AG04450 (cell line): ENCODE measurements at regions of chr17 and their contacts with region 1.

Region 1: DNA sequence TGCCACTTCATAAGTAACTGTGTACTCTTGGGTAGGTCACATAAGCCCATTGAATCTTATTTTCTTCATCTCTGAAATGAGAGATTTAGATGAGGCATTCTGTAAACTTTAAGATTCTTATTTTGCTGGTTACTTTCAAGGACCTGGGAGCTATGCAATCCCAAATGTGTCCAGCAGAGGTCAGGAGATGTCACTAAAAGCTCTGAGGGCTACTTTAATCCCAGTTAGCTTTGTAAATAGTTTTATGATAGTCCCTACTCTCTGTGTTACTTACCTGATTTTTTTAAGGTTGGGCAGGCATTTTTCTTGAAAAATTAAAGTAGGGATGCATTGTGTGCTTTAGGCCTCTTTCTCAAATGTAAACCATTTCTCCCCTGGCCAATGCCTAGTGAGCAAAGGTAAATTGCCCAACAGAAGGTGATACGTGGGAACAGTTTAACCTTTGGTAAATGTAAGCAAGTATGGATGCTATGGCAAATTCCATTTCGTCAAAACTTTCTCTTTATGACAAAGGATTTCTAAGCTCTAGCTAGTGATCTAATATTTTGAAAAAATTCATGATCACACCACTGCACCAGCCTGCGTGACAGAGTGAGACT is 57.1 kb upstream of the WSB1 start:
- DNase-seq: peak; percentile 59
- H3K4me3 ChIP-seq: no peak overlapping the region
- H3K27ac ChIP-seq: no peak overlapping the region
- H3K27me3 ChIP-seq: no peaks in the 10 kb centered on the region
- CTCF ChIP-seq: peak; percentile 95

Region 2: GRCh38 chr17:27199948-27200347 is 36.9 kb before region 1 on chr17:
- CTCF ChIA-PET with region 1: interaction called, 20 read pairs
- POLR2A ChIA-PET with region 1: no interaction called
- DNase-seq: no peak
- H3K4me3 ChIP-seq: no peak overlapping the region
- H3K27ac ChIP-seq: no peak overlapping the region
- H3K27me3 ChIP-seq: peaks cover 5% of the 10 kb centered on the region
- CTCF ChIP-seq: no peak

Region 3: GRCh38 chr17:27226615-27227230 is 10.1 kb before region 1 on chr17:
- CTCF ChIA-PET with region 1: interaction called, 46 read pairs
- POLR2A ChIA-PET with region 1: no interaction called
- DNase-seq: peak; percentile 37
- H3K4me3 ChIP-seq: no peak overlapping the region
- H3K27ac ChIP-seq: no peak overlapping the region
- H3K27me3 ChIP-seq: peaks cover 4% of the 10 kb centered on the region
- CTCF ChIP-seq: no peak

Region 4: DNA sequence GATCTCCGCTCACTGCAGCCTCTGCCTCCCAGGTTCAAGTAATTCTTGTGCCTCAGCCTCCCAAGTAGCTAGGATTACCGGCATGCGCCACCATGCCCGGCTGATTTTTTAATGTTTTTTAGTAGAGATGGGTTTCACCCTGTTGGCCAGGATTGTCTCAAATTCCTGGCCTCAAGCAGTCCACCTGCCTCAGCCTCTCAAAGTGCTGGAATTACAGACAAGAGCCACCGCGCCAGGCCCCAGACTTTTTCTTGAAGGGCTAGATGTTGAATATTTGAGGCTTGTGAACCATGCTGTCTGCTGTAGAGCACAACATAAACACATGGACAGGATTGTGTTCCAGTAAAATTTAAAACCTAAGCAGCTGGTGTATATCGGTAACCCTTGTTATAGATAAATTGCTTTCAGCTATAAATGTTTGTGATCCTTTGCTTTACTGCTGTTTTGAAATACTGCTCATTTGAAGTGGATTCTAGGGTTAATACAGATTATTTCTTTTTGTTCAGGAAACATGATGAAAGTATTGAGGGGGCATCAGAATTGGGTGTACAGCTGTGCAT is 69.5 kb after region 1 on chr17:
- CTCF ChIA-PET with region 1: interaction called, 24 read pairs
- POLR2A ChIA-PET with region 1: no interaction called
- DNase-seq: no peak
- H3K4me3 ChIP-seq: no peak overlapping the region
- H3K27ac ChIP-seq: no peak overlapping the region
- H3K27me3 ChIP-seq: no peaks in the 10 kb centered on the region
- CTCF ChIP-seq: no peak

Region 5: DNA sequence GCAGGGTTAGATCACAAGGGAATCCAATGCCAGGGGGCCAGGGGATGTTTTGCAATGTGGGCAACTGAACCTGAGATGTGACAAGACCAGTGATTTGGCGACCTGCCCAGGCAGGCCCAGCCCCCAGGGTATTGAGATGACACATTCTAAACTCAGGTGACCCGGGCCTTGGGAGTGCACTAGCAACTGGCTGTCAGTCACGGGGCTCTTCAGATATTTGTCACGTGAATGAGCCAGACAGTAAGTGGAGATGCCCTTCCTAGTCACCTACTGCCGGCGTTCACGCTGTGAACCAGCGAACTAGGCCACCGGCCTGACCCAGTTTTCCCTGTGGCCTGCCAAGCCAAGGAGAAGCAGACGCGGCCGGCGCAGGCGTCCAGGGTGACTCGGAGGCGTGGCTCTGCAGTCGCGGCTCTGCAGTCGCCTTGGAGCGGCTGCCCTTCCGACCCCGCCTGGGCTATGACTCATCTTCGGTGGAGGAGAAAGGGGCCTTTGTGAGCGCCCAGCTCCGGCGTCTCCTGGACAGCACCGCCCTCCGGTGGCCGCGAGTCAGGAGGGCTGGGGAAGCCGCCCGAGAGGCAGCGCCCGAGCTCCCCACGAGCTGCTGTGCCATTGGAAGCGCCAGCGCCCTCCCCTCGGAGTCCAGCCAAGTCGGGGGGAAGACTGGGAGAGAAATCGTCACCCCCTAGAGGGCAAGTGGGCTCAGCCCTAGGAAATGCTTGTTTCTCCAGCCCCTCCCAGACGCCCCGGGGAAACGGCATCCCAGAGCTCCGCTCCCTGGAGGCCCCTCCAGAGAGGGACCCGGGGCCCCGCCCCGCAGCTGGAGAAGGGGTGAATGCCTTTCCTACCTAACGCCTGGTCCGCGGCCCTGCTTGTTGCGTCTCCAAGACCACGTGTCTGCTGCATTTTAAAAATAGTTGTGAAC is 95.9 kb after region 1 on chr17:
- CTCF ChIA-PET with region 1: interaction called, 111 read pairs
- POLR2A ChIA-PET with region 1: interaction called, 6 read pairs
- DNase-seq: peak; percentile 89
- H3K4me3 ChIP-seq: peak overlapping the region; percentile 61
- H3K27ac ChIP-seq: peak overlapping the region; percentile 86
- H3K27me3 ChIP-seq: no peaks in the 10 kb centered on the region
- CTCF ChIP-seq: peak; percentile 78

Region 6: DNA sequence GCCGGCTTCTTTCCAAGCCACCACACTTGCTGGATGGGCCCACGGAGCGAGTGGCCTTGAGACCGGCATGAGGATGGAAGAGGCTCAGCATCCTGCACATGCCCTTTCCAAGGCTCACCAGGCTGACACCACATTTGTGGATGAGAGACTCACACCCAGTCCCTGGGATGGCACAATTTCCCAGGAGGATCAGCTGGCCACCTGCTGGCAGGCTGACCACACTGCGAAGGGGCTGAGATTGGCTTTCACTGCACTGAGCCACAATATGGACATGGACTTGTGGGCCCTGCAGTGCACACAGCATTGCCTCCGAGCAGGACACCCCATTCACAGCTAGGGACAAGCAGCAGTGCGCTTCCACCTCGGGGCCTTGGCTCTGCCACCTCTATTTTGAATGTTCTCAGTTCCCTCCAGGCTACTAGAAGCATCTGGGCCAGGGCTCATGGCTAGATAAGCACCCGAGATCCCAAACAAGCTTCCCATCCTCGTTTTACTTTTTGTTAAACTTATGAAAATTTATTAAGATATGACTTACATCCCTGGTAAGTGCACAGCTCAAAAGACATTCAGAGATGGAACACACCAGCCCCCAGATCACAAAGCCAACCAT is 194.2 kb after region 1 on chr17:
- CTCF ChIA-PET with region 1: interaction called, 15 read pairs
- POLR2A ChIA-PET with region 1: no interaction called
- DNase-seq: no peak
- H3K4me3 ChIP-seq: no peak overlapping the region
- H3K27ac ChIP-seq: no peak overlapping the region
- H3K27me3 ChIP-seq: no peaks in the 10 kb centered on the region
- CTCF ChIP-seq: peak; percentile 81

Region 7: DNA sequence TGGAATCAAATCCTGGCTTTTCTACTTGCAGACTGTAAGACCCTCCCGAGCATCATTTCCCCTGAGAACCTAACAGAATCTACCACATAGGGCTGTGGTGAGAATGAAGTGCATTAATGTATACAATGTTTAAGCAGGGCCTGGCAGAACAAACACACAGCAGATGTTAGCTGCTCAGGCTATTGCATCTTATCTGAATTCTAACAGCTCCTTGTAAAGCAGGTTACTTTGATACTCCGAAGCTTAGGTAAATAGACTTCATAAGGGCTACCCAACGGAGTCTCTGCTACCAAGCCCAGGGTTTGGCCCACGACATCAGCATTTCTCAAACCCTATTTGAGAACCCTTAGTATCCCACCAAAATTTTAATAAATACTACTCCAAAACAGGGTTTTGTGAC is 587.9 kb after region 1 on chr17:
- CTCF ChIA-PET with region 1: no interaction called
- POLR2A ChIA-PET with region 1: no interaction called
- DNase-seq: no peak
- H3K4me3 ChIP-seq: no peak overlapping the region
- H3K27ac ChIP-seq: no peak overlapping the region
- H3K27me3 ChIP-seq: no peaks in the 10 kb centered on the region
- CTCF ChIP-seq: no peak

Region 8: GRCh38 chr17:28071891-28072606 is 835.2 kb after region 1 on chr17:
- CTCF ChIA-PET with region 1: no interaction called
- POLR2A ChIA-PET with region 1: no interaction called
- DNase-seq: no peak
- H3K4me3 ChIP-seq: no peak overlapping the region
- H3K27ac ChIP-seq: no peak overlapping the region
- H3K27me3 ChIP-seq: no peaks in the 10 kb centered on the region
- CTCF ChIP-seq: no peak